GM10248 (cell line): ENCODE measurements at regions of chr10 and their contacts with region 1.

Region 1: DNA sequence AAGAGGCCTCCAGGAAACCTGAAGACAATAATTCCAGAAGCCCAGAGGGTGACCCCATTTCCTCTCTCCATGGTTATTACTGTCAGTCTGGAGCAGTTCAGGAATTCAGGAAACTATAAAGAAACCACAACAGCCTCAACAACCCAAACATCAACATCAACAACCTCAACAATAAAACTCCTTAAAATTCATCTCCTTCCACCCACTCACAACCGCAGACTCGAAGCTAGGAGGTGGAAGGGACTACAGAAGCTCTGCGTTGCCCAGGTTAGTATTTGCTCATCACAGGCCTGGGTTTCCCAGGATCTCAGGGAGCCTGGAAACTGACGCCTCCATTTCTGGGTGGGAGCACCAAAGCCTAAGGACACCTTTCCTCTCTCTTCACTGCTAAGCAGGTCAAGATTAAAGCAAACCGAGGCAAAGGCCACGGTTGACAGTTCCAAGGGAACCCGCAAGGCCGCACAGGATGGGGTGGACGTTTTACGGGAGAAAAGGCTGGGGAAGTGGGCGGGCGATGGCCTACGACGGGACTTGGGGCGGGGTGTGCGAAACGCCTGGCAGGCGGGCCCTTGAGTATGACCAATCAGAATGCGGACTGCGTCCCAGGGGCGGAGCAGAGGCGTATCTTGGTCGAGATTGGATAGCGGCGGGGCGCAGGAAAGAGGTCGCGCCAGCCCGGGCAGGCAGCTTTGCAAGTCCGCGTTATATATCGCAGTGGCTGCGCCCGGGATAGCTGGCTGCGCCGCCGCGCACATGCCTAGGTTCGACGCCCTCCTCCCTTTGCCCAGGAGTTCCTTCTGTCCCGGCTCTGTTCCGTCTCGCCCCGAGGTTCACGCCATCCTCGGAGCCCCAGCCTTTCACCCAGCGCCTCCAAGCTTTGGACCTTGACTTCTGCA is at the start of gene ELOVL3:
- DNase-seq: peak; percentile 94
- CTCF ChIP-seq: no peak

Region 2: DNA sequence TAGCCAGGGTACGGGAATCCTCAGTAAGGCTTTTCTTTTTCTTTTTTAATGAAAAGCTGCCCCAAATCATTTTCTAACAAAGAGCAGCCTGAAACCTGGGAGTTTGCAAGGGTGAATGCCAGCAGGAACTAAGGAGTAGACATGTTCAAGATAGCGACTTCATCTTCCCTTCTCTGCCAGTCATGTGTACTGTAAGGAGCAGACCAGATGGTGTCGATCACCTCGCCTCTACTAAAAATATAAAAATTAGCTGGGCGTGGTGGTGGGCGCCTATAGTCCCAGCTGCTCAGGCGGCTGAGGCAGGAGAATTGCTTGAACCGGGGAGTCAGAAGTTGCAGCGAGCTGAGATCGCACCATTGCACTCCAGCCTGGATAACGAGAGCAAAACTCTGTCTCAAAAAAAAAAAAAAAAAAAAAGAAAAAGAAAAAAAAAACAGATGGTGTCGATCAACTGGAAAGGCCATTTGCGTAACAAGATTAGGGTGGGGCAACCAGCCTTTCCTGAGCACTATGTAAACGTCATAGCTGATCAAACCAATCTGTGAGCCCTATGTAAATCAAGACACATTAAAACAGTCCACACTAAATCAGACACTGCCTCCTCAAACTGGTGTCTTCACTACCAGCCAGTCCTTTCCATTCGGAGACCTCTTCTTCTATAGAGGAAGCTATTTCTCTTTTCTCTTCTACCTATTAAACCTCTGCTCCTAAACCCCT is 39.9 kb before region 1 on chr10:
- CTCF ChIA-PET with region 1: interaction called, 23 read pairs
- POLR2A ChIA-PET with region 1: no interaction called
- DNase-seq: no peak
- CTCF ChIP-seq: no peak

Region 3: DNA sequence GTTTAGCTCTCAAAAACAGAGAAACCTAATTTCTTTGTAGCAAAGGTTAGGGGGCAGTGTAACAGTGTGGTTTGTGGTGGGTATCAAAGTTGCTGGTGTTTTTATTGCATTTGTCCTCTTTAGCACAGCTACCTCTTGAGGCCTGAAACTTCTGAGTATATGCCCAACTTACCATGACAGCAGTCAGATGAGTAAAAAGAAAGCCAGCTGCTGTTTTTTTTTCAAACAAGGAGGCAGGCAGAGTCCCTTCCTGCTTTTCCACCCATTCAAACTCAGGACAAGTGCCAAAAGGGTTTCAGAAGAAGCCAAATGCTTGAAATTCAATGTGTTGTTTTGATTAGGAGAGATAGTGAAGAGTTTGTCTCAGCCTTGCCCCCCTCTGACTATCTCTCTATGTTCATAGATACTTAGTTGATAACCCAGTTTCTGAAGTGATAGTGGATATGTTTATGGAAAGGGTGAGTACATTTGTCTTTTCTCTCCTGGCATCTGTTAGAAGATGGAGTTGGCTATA is 42.5 kb after region 1 on chr10:
- CTCF ChIA-PET with region 1: interaction called, 32 read pairs
- POLR2A ChIA-PET with region 1: no interaction called
- DNase-seq: no peak
- CTCF ChIP-seq: no peak

Region 4: GRCh38 chr10:102352066-102352715 is 126.3 kb after region 1 on chr10:
- CTCF ChIA-PET with region 1: interaction called, 566 read pairs
- POLR2A ChIA-PET with region 1: interaction called, 5 read pairs
- DNase-seq: peak; percentile 72
- CTCF ChIP-seq: peak; percentile 89

Region 5: DNA sequence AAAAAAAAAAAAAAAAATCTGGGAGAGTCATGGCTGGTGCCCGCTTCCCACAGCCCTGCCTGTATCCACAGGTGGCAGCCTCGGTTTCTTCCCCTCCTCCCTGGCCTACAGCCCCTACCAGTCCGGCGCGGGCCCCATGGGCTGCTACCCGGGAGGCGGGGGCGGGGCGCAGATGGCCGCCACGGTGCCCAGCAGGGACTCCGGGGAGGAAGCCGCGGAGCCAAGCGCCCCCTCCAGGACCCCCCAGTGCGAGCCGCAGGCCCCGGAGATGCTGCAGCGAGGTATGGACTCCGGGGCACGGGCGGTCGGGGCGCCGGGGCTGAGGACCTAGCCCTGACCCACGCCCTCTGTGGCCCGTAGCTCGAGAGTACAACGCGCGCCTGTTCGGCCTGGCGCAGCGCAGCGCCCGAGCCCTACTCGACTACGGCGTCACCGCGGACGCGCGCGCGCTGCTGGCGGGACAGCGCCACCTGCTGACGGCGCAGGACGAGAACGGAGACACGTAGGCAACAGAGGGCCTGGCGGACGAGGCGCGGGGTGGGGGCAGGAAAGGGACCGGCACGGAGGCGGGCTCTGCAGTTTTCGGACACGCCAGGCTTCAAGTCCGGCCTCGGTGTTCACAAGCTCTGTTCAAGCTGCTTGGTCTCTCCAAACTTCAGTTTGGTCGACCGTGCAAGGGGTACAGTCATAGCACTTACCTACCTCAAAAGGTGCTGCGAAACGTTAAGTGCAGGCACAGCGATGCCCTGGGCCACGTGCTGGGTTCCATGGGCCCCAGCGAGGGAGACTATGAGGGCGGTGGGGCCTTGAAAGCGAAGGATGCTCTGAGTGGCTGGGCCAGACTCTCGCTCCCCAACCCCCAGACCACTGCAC is 173.6 kb after region 1 on chr10:
- CTCF ChIA-PET with region 1: interaction called, 213 read pairs
- POLR2A ChIA-PET with region 1: no interaction called
- DNase-seq: peak; percentile 89
- CTCF ChIP-seq: peak; percentile 99

Region 6: DNA sequence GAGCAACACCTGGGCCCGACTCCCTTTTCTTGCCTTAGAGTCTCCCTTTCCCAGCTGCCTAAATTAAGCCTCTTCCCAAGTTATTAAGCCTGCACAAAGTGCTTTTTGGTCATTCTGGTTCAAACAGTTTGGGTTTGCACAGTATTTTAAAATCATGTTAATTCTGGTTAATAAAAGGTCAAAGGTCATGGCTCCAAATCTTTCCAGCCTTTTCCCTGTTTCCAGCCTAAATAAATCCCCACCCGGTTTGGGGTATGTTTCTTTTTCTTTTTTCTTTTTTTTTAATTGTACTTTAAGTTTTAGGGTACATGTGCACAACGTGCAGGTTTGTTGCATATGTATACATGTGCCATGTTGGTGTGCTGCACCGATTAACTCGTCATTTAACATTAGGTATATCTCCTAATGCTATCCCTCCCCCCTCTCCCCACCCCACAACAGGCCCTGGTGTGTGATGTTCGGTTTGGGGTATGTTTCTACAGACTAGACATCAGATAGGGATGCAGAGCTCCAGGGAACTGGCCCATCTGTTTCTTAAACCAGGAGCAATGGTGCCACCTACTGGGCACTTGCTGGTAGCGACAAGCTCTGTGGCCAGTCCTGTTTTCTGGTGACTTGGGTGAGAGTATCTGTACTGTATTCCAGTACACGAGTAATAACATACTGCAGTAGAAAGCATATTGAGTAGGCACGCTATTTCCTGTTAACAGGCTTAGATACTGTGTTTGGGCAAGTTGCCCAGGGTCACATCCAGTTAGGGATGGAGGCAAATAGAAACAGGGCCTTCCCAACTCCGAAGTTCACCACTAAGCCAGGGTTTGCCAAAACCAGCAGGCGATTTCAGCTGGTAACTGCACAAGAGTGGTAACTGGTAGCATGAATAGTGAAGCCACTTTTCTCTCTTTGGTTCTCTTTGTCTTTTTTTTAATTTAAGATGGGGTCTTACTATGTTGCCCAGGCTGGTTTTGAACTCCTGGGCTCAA is 357.8 kb after region 1 on chr10:
- CTCF ChIA-PET with region 1: interaction called, 32 read pairs
- POLR2A ChIA-PET with region 1: no interaction called
- DNase-seq: peak; percentile 89
- CTCF ChIP-seq: peak; percentile 85

Region 7: GRCh38 chr10:102704915-102705314 is 479.0 kb after region 1 on chr10:
- CTCF ChIA-PET with region 1: no interaction called
- POLR2A ChIA-PET with region 1: no interaction called
- DNase-seq: no peak
- CTCF ChIP-seq: no peak